HCT116 (cell line): ENCODE measurements at regions of chr17 and their contacts with region 1.

Region 1: GRCh38 chr17:51371732-51372151 is 111.4 kb downstream of the UTP18 start:
- DNase-seq: peak; percentile 84
- ATAC-seq: peak; percentile 87
- H3K4me3 ChIP-seq: peak overlapping the region; percentile 71 to 78
- H3K27ac ChIP-seq: peak overlapping the region; percentile 71
- H3K4me1 ChIP-seq: peaks cover 0 to 16% of the 10 kb centered on the region in 2 experiments; a peak in 1 of 4 replicates
- H3K27me3 ChIP-seq: no peaks in the 10 kb centered on the region
- CTCF ChIP-seq: peak; percentile 88 to 98 (median 96)
- POLR2A ChIP-seq: peak; percentile 27
- RAD21 ChIP-seq: peak; percentile 96

Region 2: DNA sequence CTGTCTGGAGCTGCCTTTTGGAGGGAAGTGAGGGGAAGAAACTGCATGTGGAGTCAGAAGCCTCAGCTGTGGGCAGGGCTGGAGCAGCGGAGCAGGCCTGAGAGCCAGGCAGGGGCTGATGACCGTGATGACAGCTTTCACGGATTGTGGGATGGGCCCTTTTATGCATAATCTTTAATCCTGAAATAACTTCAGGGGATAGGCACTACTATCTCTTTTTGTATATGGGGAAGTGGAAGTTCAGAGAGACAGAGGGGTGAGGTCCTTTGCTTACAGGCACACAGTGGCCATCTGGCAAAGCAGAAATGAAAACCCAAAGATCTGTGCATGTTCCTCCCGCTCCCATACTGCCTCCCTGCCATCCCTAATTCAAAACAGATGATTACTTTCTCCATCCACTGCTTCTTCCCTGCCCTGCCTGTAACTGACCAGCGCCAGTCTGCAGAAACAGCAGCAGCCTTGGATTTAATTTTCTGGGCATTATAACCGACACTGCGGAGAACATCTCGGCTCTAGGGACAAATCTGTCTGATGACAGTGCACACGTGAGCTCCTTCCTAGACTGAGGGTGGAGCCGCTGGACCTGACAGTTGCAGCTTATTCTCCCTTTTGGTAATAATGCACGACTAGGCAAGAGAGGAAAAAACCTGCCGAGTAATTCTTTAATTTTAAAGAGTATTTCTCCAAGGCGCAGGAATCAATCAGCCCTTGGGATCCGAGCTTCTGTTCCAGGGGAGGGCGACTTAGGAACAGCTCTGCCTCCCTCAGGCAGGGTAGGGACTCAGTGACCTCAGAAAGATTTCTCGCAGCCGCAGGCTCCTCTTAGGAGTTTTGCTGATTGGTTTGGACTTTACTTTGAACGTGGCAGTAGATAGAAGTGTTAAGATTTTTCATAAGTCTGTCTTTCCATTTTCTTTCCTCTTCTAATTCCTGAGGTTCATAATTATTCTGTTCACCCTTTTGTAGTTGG is 16.0 kb before region 1 on chr17:
- CTCF ChIA-PET with region 1: no interaction called
- POLR2A ChIA-PET with region 1: no interaction called
- RAD21 ChIA-PET with region 1: no interaction called
- intact Hi-C with region 1: no loop called
- DNase-seq: no peak
- ATAC-seq: peak; percentile 27; the same call in 1 of the 2 replicates
- H3K4me3 ChIP-seq: no peak overlapping the region
- H3K27ac ChIP-seq: no peak overlapping the region
- H3K4me1 ChIP-seq: no peaks in the 10 kb centered on the region
- H3K27me3 ChIP-seq: peaks cover 21% of the 10 kb centered on the region
- CTCF ChIP-seq: no peak
- POLR2A ChIP-seq: no peak
- RAD21 ChIP-seq: no peak

Region 3: GRCh38 chr17:51461578-51462004 is 89.8 kb after region 1 on chr17:
- CTCF ChIA-PET with region 1: interaction called, 6 read pairs
- POLR2A ChIA-PET with region 1: no interaction called
- RAD21 ChIA-PET with region 1: interaction called in 1 of 2 experiments, 3 read pairs
- intact Hi-C with region 1: loop called (anchors 1 kb)
- DNase-seq: peak; percentile 78
- ATAC-seq: peak; percentile 97
- H3K4me3 ChIP-seq: no peak overlapping the region
- H3K27ac ChIP-seq: no peak overlapping the region
- H3K4me1 ChIP-seq: peaks cover 0 to 4% of the 10 kb centered on the region in 2 experiments; a peak in 1 of 4 replicates
- H3K27me3 ChIP-seq: peaks cover 16% of the 10 kb centered on the region
- CTCF ChIP-seq: peak; percentile 63 to 100 (median 100); a peak in 5 of 6 replicates
- POLR2A ChIP-seq: no peak
- RAD21 ChIP-seq: peak; percentile 72

Region 4: DNA sequence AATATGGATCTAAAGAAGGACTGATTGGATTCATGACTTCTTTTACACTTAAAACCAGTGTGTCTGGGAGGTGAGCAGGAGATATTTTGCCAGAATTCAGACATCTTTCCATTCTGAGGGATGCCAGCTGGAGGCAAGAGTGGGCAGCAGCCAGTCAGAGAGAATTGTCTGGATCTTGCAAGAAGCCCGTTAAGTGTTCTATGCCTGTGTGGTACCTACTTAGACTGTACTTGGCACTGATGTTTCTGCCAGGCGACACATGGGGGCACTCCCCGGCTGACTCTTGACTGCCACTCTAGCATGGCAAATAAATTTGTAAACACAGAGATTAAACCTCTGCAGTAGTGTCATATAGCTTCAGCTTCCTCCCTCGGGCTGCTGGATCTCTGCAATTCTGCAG is 136.3 kb after region 1 on chr17:
- CTCF ChIA-PET with region 1: no interaction called
- POLR2A ChIA-PET with region 1: no interaction called
- RAD21 ChIA-PET with region 1: no interaction called
- intact Hi-C with region 1: no loop called
- DNase-seq: no peak
- ATAC-seq: peak; percentile 52; the same call in 1 of the 2 replicates
- H3K4me3 ChIP-seq: no peak overlapping the region
- H3K27ac ChIP-seq: no peak overlapping the region
- H3K4me1 ChIP-seq: no peaks in the 10 kb centered on the region
- H3K27me3 ChIP-seq: peaks cover 86% of the 10 kb centered on the region
- CTCF ChIP-seq: 0 out of 6 replicates have a peak, but pooled peaks of 1 of the 3 experiments have one; percentile 4
- POLR2A ChIP-seq: no peak
- RAD21 ChIP-seq: peak; percentile 16; the same call in 1 of the 2 replicates

Region 5: DNA sequence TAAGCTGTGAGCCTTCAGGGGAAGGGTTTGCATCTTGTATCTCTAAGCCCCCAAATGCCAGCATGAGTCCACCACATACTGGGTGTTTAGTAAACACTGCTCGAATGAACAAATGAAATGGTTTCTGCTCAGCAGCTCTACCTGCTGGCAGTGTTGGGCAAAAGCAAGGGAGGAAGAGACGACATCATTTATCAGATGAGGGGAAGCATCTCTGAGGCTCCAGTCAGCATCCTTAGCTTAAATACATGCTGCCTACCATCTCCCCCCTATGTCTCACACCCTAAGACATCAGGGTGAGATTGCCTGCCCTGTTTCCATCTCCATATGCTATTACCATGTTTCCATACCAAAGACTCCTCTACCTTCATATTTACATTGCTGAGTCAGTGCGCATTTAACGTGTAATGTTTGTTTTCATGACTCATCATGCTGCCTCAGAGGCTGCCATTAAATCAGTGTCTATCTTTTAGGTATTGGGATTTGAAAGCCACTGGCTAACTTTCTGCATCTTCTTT is 268.4 kb after region 1 on chr17:
- CTCF ChIA-PET with region 1: interaction called, 15 read pairs
- POLR2A ChIA-PET with region 1: no interaction called
- RAD21 ChIA-PET with region 1: interaction called in 1 of 2 experiments, 4 read pairs
- intact Hi-C with region 1: loop called (anchors 1 kb)
- DNase-seq: peak; percentile 22
- ATAC-seq: peak; percentile 84
- H3K4me3 ChIP-seq: no peak overlapping the region
- H3K27ac ChIP-seq: no peak overlapping the region
- H3K4me1 ChIP-seq: no peaks in the 10 kb centered on the region
- H3K27me3 ChIP-seq: peaks cover 40% of the 10 kb centered on the region
- CTCF ChIP-seq: peak; percentile 60 to 81 (median 75); a peak in 5 of 6 replicates
- POLR2A ChIP-seq: no peak
- RAD21 ChIP-seq: peak; percentile 57

Region 6: GRCh38 chr17:51764387-51764972 is 392.7 kb after region 1 on chr17:
- CTCF ChIA-PET with region 1: interaction called, 6 read pairs
- POLR2A ChIA-PET with region 1: no interaction called
- RAD21 ChIA-PET with region 1: interaction called in 1 of 2 experiments, 3 read pairs
- intact Hi-C with region 1: loop called (anchors 1 kb)
- DNase-seq: peak; percentile 68
- ATAC-seq: peak; percentile 99
- H3K4me3 ChIP-seq: no peak overlapping the region
- H3K27ac ChIP-seq: no peak overlapping the region
- H3K4me1 ChIP-seq: no peaks in the 10 kb centered on the region
- H3K27me3 ChIP-seq: peaks cover 11% of the 10 kb centered on the region; the same call in 1 of the 2 replicates
- CTCF ChIP-seq: peak; percentile 53 to 98 (median 96); a peak in 5 of 6 replicates
- POLR2A ChIP-seq: no peak
- RAD21 ChIP-seq: peak; percentile 82